MCF 10A (cell line): ENCODE measurements at regions of chr1 and their contacts with region 1.

Region 1: DNA sequence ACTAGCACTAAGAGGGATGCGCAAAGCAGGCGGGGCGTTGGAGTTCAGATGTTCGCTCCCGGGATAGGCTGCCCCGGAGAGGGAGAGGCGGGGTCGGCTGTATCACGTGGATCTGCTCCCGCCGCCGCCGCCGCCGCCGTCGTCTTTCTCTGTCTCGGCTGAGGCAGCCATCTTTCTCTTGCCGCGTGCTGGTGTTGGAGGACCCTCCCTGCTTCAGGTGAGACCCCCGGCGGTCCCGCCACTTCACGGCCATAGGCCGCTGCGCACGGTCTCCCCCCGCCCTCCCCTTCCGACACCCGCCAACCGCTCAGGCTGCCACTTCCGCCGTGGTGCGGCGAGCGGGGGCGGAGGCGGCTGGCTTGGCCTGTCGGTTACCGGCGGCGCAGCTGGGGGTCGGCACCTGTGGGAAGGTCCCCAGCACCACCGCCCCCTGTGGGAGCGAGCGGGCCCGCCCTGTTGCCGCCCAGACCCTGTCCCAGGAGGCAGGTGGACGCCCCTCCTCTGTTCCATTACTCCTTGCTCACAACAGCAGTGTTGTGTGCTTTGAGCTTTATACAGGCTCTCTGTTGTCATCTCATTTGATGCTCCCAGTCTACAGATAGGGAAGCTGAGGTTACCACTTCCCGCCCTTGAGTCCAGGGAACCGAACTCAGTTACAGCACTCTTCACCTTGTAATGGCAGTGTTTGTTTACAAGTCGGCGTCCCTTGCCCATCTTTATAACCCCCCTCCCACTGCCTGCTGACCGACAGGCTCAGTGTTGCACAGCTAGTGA is at the start of gene BTF3L4:
- DNase-seq: peak; percentile 93
- H3K4me3 Mint-ChIP-seq: peak within 1 kb of the TSS; percentile 97
- H3K27ac Mint-ChIP-seq: peak within 1 kb of the TSS; percentile 99
- H3K4me1 Mint-ChIP-seq: peaks cover 29% of the 10 kb centered on the region
- H3K27me3 Mint-ChIP-seq: no peaks in the 10 kb centered on the region
- CTCF ChIP-seq: no peak
- total RNA-seq, gene BTF3L4: 76.0 and 77.0 TPM in 2 replicates

Region 2: DNA sequence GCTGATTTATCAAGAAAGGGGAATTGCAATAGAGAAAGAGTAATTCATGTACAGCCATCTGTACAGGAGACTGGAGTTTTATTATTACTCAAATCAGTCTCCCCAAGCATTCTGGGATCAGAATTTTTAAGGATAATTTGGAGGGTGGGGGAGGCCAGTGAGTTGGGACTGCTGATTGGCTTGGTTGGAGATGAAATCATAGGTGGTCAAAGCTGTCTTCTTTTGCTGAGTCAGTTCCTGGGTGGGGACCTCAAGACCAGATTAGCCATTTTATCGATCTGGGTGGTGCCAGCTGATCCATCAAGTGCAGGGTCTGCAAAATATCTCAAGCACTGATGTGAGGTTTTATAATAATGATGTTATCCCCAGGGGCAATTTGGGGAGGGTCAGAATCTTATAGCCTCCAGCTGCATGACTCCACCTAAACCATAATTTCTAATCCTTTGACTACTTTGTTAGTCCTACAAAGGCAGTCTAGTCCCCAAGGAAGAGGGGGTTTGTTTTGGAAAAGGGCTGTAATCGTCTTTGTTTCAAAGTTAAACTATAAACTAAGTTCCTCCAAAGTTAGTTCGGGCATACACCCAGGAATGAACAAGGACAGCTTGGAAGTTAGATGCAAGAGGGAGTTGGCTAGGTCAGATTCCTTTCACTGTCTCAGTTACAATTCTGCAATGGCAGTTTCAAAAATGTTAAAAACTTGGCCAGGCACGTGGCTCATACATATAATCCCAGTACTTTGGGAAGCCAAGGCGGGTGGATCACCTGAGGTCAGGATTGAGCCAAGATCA is 48.9 kb before region 1 on chr1:
- CTCF ChIA-PET with region 1: no interaction called
- POLR2A ChIA-PET with region 1: no interaction called
- intact Hi-C with region 1: no loop called
- DNase-seq: no peak
- H3K4me3 Mint-ChIP-seq: no peak overlapping the region
- H3K27ac Mint-ChIP-seq: no peak overlapping the region
- H3K4me1 Mint-ChIP-seq: no peaks in the 10 kb centered on the region
- H3K27me3 Mint-ChIP-seq: no peaks in the 10 kb centered on the region
- CTCF ChIP-seq: no peak

Region 3: DNA sequence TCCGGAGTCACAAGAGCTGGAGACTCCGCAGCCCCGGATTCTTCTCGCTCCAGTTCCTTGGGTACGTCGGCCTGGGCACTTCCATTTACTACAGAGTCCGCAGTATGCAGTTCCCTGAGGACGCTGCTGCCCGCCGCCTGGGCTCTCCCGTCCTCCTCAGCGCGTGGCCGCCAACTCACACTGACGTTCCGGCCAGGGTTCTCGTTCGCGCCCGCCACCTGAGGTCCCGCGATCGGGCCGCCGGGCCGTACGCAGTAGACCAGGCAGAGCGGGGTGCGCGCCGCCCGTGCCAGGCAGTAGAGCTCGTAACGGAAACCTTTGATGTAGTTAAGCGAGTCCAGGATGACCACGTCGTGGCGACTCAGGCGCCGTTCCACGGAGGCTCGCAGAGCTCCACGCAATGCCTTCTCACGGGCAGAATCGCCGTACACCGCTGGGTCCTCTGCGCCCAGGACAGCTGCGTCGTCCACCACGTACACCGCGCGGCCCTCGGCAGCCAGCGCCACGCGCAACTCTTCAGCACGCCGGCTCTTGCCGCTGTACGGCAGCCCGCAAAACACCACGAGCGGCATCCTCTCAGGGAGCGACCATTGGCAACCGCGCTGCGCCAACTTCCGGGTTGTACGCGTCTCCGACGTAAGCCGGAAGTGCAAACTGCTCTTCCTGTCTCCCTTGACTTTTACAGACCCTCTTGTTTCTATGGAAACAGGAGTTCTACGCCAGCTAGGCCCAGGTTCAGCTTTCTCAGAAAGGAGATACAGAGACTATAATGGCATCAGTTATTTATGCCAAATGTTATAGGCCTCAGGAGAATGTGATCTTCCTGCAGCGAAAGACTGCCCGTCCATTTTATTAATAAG is 22.9 kb before region 1 on chr1 and contains the start of gene KTI12:
- CTCF ChIA-PET with region 1: interaction called, 3 read pairs
- POLR2A ChIA-PET with region 1: interaction called, 73 read pairs
- intact Hi-C with region 1: no loop called
- DNase-seq: peak; percentile 79
- H3K4me3 Mint-ChIP-seq: peak within 1 kb of the TSS; percentile 89
- H3K27ac Mint-ChIP-seq: peak within 1 kb of the TSS; percentile 91
- H3K4me1 Mint-ChIP-seq: peaks cover 23% of the 10 kb centered on the region
- H3K27me3 Mint-ChIP-seq: no peaks in the 10 kb centered on the region
- CTCF ChIP-seq: no peak
- total RNA-seq, gene KTI12: 6.5 and 7.0 TPM in 2 replicates

Region 4: DNA sequence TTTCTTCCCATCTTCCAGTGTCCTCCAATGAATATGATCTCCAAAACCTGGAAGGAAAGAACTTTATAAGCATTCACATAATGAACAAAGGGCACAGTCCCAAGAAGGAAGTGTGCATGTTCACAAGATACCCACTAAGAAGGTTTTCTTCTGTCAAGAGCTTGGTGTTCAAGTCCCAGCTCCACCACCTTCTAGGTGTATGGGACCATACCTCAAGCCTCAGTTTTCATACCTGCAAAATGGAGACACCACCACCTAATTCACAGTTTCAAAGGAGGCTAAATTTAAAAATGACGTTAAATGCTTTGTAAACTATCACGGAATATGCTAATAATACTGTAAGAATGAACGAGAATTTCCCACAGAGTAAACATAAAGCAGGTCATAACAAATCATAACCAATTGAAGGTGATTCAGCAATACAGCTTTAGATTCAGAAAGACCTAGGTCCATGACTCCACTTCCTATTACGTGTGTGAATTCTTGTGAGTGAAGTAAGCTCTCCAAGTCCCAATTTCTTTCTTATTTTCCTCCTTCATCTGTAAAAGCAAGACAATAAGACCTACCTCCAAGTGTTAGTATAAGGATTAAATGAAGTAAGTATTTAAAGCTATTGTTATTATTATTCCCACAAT is 14.7 kb before region 1 on chr1:
- CTCF ChIA-PET with region 1: interaction called, 4 read pairs
- POLR2A ChIA-PET with region 1: interaction called, 20 read pairs
- intact Hi-C with region 1: no loop called
- DNase-seq: no peak
- H3K4me3 Mint-ChIP-seq: no peak overlapping the region
- H3K27ac Mint-ChIP-seq: peak overlapping the region; percentile 12
- H3K4me1 Mint-ChIP-seq: peaks cover 15% of the 10 kb centered on the region
- H3K27me3 Mint-ChIP-seq: no peaks in the 10 kb centered on the region
- CTCF ChIP-seq: no peak

Region 5: DNA sequence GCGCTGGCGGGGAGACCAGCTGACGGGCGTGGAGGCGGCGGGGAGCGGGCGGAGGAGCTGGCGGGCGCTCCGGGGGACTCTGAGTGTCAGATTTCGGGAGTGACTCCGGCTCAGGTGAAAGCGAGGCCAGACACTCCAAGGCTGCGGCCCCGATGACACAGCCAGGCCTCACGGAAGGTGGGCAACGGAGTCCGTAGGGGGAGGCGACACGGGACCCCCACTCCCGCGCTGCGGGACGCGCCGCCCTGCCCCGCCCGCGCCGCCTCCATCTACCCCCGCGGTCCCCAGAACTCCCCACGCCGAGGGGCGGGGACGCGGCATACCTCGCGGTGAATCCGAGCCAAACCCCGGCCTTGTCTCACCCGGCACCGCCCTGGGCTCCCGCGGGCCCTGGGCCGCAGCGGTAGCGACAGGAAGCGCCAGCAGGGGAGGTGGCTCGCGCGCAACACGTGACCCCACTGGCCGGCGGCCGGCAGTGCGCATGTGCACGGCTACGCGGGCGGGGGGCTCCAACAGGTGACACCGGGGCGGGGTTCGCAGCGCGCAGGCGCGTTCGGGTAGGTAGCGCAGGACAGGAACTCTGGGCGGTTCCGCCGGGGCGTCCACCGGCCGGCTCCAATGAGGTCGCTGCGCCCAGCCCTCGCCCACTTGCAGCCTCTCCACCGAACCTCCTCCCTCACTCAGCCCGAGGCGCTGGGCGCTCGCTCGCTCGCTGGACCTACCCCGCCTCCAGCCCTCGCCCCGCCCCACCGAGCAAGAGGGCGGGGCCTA is 309.6 kb after region 1 on chr1 and contains the start of gene CC2D1B:
- CTCF ChIA-PET with region 1: no interaction called
- POLR2A ChIA-PET with region 1: interaction called, 7 read pairs
- intact Hi-C with region 1: loop called (anchors 5 kb)
- DNase-seq: peak; percentile 98
- H3K4me3 Mint-ChIP-seq: peak within 1 kb of the TSS; percentile 99
- H3K27ac Mint-ChIP-seq: peak within 1 kb of the TSS; percentile 95
- H3K4me1 Mint-ChIP-seq: peaks cover 21% of the 10 kb centered on the region
- H3K27me3 Mint-ChIP-seq: no peaks in the 10 kb centered on the region
- CTCF ChIP-seq: no peak
- total RNA-seq, gene CC2D1B: 28.4 and 29.5 TPM in 2 replicates

Region 6: GRCh38 chr1:52404116-52404986 is 348.0 kb after region 1 on chr1 and contains the starts of genes ORC1 and PRPF38A:
- CTCF ChIA-PET with region 1: interaction called, 4 read pairs
- POLR2A ChIA-PET with region 1: interaction called, 10 read pairs
- intact Hi-C with region 1: no loop called
- DNase-seq: peak; percentile 98
- H3K4me3 Mint-ChIP-seq: peak within 1 kb of the TSS; percentile 100
- H3K27ac Mint-ChIP-seq: peak within 1 kb of the TSS; percentile 97
- H3K4me1 Mint-ChIP-seq: peaks cover 7% of the 10 kb centered on the region
- H3K27me3 Mint-ChIP-seq: no peaks in the 10 kb centered on the region
- CTCF ChIP-seq: peak; percentile 36
- total RNA-seq, gene ORC1: 1.8 and 2.7 TPM in 2 replicates
- total RNA-seq, gene PRPF38A: 63.8 TPM in 2 replicates